ENCODE measurements at regions of chr9 and their contacts with region 1.

Region 1: GRCh38 chr9:110382741-110383140 is 45.1 kb upstream of the TXNDC8 start:
- DNase-seq: no peak

Region 2: GRCh38 chr9:111839388-111839787 is 1456.6 kb after region 1 on chr9:
- intact Hi-C with region 1: loop called in 1 of 2 experiments (anchors 5 kb)
- DNase-seq: no peak